Activated T-helper 2 cell treated with anti-CD3 and anti-CD28 coated beads, Interferon-gamma antibody, Interleukin-2, Interleukin-4, amounts not matched to agents 10 μg/mL and 5 μg/mL and 100 μg/mL, durations not matched to agents 14 hours and 24 hours and 36 hours (primary cell): ENCODE measurements at regions of chr7 and their contacts with region 1.

Region 1: DNA sequence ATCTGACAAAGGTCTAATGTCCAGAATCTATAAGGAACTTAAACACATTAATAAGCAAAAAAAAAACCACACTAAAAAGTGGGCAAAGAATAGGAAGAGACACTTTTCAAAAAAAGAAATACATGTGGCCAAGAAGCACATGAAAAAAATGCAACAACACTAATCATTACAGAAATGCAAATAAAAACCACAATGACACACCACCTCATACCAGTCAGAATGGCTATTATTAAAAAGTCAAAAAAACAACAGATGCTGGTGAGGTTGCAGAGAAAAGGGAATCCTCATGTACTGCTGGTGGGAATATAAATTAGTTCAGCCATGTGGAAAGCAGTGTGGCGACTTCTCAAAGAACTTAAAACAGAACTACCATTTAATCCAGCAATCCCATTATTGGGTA is 119.0 kb downstream of the LMBR1 start:
- DNase-seq: no peak
- H3K4me3 Mint-ChIP-seq: no peak overlapping the region
- H3K27ac Mint-ChIP-seq: peak overlapping the region; percentile 73
- H3K4me1 Mint-ChIP-seq: peaks cover 61% of the 10 kb centered on the region
- H3K27me3 Mint-ChIP-seq: no peaks in the 10 kb centered on the region

Region 2: DNA sequence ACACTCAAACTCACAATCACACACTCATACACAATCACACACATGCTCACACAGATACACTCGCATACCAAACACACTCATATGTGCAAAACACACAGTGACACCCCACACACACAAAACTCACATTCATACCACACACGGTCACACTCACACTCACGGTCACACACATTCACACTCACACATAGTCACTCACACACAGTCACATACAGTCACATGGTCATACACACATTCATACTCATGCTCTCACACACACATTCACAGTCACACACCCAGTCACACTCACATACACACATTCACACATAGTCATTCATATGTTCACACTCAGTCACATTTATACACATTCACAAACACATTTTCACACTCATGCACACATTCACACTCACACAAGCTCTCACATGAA is 429.4 kb before region 1 on chr7:
- intact Hi-C with region 1: no loop called
- DNase-seq: no peak
- H3K4me3 Mint-ChIP-seq: no peak overlapping the region
- H3K27ac Mint-ChIP-seq: no peak overlapping the region
- H3K4me1 Mint-ChIP-seq: no peaks in the 10 kb centered on the region
- H3K27me3 Mint-ChIP-seq: no peaks in the 10 kb centered on the region

Region 3: DNA sequence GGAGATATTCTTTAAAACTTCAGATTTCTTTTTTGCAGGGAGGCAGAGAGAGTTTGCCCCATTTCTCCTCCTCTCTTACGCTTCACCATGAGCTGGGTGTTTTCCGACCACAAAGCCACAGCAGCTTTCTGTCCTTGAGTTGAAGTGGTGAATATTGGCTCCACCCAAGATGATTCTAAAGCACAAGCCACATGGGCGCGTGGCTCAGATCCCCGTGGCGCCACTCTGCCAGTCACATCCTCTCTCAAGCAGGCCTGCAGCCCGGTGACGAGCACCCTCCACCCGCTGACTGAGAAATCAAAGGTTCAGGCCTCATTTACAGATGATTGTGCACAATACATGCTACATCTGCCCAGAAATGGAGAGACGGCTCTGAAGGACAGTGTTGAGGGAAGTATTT is 161.0 kb before region 1 on chr7:
- intact Hi-C with region 1: loop called (anchors 2 kb)
- DNase-seq: peak; percentile 86
- H3K4me3 Mint-ChIP-seq: peak overlapping the region; percentile 63
- H3K27ac Mint-ChIP-seq: peak overlapping the region; percentile 73
- H3K4me1 Mint-ChIP-seq: peaks cover 51% of the 10 kb centered on the region
- H3K27me3 Mint-ChIP-seq: peaks cover 38% of the 10 kb centered on the region

Region 4: DNA sequence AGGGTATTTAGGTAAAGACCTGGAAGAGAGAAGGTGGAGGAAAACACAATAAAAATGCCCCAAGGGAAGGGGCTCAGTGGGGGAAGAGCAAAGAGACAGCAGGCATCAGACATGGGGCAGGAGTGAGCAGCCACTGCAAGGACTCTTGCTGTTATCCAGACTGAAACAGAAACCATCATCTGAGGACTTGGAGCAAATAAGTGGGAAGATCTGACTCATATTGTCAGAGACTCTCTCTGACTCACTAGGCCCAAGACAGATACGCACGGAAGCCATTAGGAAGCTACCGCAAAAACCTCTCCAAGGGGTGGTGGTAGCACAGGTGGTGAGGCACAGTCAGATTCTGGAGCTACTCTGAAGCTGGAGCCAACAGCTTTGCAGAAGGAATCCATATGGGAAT is 22.6 kb before region 1 on chr7:
- intact Hi-C with region 1: loop called (anchors 1 kb)
- DNase-seq: peak; percentile 62
- H3K4me3 Mint-ChIP-seq: peak overlapping the region; percentile 24
- H3K27ac Mint-ChIP-seq: no peak overlapping the region
- H3K4me1 Mint-ChIP-seq: peaks cover 27% of the 10 kb centered on the region
- H3K27me3 Mint-ChIP-seq: no peaks in the 10 kb centered on the region

Region 5: GRCh38 chr7:156842740-156843140 is 68.8 kb after region 1 on chr7:
- intact Hi-C with region 1: no loop called
- DNase-seq: no peak
- H3K4me3 Mint-ChIP-seq: no peak overlapping the region
- H3K27ac Mint-ChIP-seq: no peak overlapping the region
- H3K4me1 Mint-ChIP-seq: no peaks in the 10 kb centered on the region
- H3K27me3 Mint-ChIP-seq: no peaks in the 10 kb centered on the region

Region 6: DNA sequence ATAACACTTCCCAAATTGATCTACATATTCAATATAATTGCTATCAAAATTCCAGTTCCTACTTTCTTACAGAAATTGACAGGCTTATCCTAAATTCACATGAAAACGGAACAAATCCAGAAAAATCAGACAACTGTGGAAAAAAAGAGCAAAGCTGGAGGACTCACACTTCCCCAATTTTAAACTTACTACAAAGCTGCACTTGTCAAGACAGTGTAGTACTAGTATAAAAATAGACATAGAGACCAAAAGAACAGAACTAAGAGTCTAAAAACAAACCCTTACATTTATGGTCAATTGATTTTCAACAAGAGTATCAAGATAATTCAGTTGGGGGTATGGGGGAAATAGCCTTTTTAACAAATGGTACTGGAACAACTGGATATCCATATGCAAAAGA is 91.5 kb after region 1 on chr7:
- intact Hi-C with region 1: no loop called
- DNase-seq: no peak
- H3K4me3 Mint-ChIP-seq: no peak overlapping the region
- H3K27ac Mint-ChIP-seq: no peak overlapping the region
- H3K4me1 Mint-ChIP-seq: no peaks in the 10 kb centered on the region
- H3K27me3 Mint-ChIP-seq: no peaks in the 10 kb centered on the region